Motor neuron (in vitro differentiated cells): ENCODE measurements at regions of chr19 and their contacts with region 1.

Region 1: GRCh38 chr19:3304871-3305423 is 61.4 kb upstream of the NFIC start:
- ATAC-seq: peak; percentile 53 to 73 (median 68)
- H3K4me3 ChIP-seq: no peak overlapping the region
- H3K27ac ChIP-seq: no peak overlapping the region
- H3K4me1 ChIP-seq: no peaks in the 10 kb centered on the region

Region 2: DNA sequence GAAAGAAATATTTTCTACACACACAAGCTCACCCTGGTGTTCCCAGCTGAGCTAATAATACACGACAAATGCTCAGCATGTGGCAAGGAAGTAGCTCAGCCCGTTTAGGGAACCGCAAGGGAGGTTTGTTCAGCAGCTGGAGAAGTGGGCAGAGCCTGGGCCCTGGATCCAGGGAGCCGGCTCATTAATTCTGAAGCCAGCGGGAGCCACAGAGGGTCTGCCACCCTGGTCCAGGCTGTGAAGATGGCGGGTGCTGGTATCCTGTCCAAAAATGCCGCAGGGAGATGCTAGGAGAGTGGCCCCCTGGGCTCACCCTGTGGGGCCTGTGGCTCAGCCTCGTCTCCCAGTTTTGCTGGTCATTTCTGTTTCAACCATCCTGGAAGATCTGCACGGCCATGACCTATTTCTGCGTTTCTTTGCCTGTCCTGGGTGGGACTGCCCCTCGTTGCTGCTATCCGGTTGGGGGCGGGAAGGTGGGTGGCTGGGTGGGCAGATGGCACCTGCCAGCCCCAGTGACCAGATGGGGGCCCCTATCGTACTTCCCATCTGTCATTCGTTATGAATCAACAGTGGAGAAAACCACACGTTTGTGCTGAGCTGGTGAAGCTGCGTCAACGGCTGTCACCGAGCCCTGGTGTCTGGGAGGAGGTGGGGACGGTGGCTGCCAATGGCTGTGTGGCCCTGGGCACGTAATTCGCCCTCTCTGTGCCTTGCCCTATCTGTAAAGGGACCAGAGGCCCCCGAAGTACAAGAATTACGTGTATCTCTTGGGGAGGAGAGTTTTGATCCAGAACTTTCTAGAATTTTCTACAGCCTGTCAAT is 171.8 kb before region 1 on chr19:
- in situ Hi-C with region 1: no loop called
- ATAC-seq: peak in 5 of 8 experiments; percentile 12 to 66 (median 45)
- H3K4me3 ChIP-seq: no peak overlapping the region
- H3K27ac ChIP-seq: no peak overlapping the region
- H3K4me1 ChIP-seq: no peaks in the 10 kb centered on the region

Region 3: GRCh38 chr19:3618144-3618810 is 313.3 kb after region 1 on chr19:
- in situ Hi-C with region 1: loop called in 1 of 9 experiments (anchors 25 kb)
- ATAC-seq: peak; percentile 29 to 90 (median 44)
- H3K4me3 ChIP-seq: no peak overlapping the region
- H3K27ac ChIP-seq: no peak overlapping the region
- H3K4me1 ChIP-seq: peaks cover 3 to 8% of the 10 kb centered on the region in 2 donors